ENCODE measurements at regions of chr15 and their contacts with region 1.

Region 1: GRCh38 chr15:37394402-37395099 is 294.2 kb upstream of the MEIS2 start:
- DNase-seq: no peak
- ATAC-seq: no peak
- H3K4me3 ChIP-seq: no peak overlapping the region
- H3K27ac ChIP-seq: no peak overlapping the region
- H3K4me1 ChIP-seq: no peaks in the 10 kb centered on the region
- H3K27me3 ChIP-seq: no peaks in the 10 kb centered on the region
- CTCF ChIP-seq: no peak

Region 2: GRCh38 chr15:37452498-37452897 is 57.9 kb after region 1 on chr15:
- intact Hi-C with region 1: loop called in 1 of 3 experiments (anchors 10 kb)
- DNase-seq: no peak
- ATAC-seq: no peak
- H3K4me3 ChIP-seq: no peak overlapping the region
- H3K27ac ChIP-seq: no peak overlapping the region
- H3K4me1 ChIP-seq: no peaks in the 10 kb centered on the region
- H3K27me3 ChIP-seq: no peaks in the 10 kb centered on the region
- CTCF ChIP-seq: no peak